Dendritic cell treated with granulocyte-macrophage colony-stimulating factor and Interleukin-4, amounts not matched to agents 40 ng/mL and 50 ng/mL, for 4 days (primary cell): ENCODE measurements at regions of chr20 and their contacts with region 1.

Region 1: GRCh38 chr20:29443819-29444218 is 1813.6 kb upstream of the DEFB115 start:
- H3K4me3 Mint-ChIP-seq: no peak overlapping the region
- H3K27ac Mint-ChIP-seq: no peak overlapping the region
- H3K4me1 Mint-ChIP-seq: no peaks in the 10 kb centered on the region
- H3K27me3 Mint-ChIP-seq: peaks cover 15% of the 10 kb centered on the region

Region 2: GRCh38 chr20:31260326-31260932 is 1816.6 kb after region 1 on chr20:
- intact Hi-C with region 1: loop called (anchors 10 kb)
- H3K4me3 Mint-ChIP-seq: no peak overlapping the region
- H3K27ac Mint-ChIP-seq: no peak overlapping the region
- H3K4me1 Mint-ChIP-seq: no peaks in the 10 kb centered on the region
- H3K27me3 Mint-ChIP-seq: no peaks in the 10 kb centered on the region